Activated CD8-positive, alpha-beta T cell treated with anti-CD3 and anti-CD28 coated beads for 36 hours (primary cell): ENCODE measurements at regions of chr18 and their contacts with region 1.

Region 1: GRCh38 chr18:12934454-12935071 is 13.2 kb upstream of the SEH1L start:
- DNase-seq: peak; percentile 89
- ATAC-seq: peak; percentile 96
- H3K4me3 Mint-ChIP-seq: no peak overlapping the region
- H3K27ac Mint-ChIP-seq: no peak overlapping the region
- H3K4me1 Mint-ChIP-seq: peaks cover 2% of the 10 kb centered on the region
- H3K27me3 Mint-ChIP-seq: peaks cover 2% of the 10 kb centered on the region
- CTCF ChIP-seq: peak; percentile 92

Region 2: DNA sequence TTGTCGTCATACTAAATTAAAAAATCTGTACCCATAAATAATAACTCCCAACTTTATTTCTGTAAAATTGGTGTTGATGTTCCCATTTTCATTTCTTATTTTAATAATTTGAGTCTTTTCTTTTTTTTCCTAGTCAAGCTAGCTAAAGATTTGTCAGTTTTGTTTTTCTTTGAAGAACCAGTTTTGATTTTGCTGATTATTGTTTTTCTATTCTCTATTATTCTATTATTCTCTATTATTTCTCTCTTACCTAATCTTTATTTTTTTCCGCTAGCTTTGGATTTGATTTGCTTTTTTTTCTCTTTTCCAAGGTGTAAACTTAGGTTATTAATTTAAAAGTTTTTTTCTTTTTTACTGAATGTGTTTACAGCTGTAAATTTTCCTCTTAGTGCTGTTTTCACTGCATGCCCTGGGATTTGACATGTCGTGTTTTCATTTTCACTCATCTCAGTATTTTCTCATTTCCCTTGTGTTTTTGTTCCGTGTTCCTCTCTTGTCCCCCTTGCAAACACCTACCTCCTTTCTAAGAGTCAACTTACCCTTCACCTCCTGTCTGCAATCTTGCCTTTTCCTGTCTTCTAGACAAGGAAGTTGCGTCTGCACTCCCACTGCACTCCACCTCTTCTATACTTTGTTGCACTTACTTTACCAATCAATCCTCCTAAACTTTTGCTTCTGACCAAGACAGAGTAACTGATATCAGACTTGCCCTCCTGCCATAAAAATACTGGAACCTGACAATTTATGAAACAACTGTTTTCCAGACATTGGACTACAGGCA is 212.9 kb before region 1 on chr18:
- CTCF ChIA-PET with region 1: interaction called, 132 read pairs
- POLR2A ChIA-PET with region 1: no interaction called
- intact Hi-C with region 1: loop called (anchors 2 kb)
- DNase-seq: no peak
- ATAC-seq: no peak
- H3K4me3 Mint-ChIP-seq: no peak overlapping the region
- H3K27ac Mint-ChIP-seq: peak overlapping the region; percentile 9
- H3K4me1 Mint-ChIP-seq: peaks cover 4% of the 10 kb centered on the region
- H3K27me3 Mint-ChIP-seq: no peaks in the 10 kb centered on the region
- CTCF ChIP-seq: no peak

Region 3: GRCh38 chr18:12737243-12737902 is 197.2 kb before region 1 on chr18:
- CTCF ChIA-PET with region 1: interaction called, 15 read pairs
- POLR2A ChIA-PET with region 1: no interaction called
- intact Hi-C with region 1: loop called (anchors 5 kb)
- DNase-seq: no peak
- ATAC-seq: no peak
- H3K4me3 Mint-ChIP-seq: no peak overlapping the region
- H3K27ac Mint-ChIP-seq: no peak overlapping the region
- H3K4me1 Mint-ChIP-seq: no peaks in the 10 kb centered on the region
- H3K27me3 Mint-ChIP-seq: no peaks in the 10 kb centered on the region
- CTCF ChIP-seq: no peak

Region 4: GRCh38 chr18:12776821-12777471 is 157.6 kb before region 1 on chr18:
- CTCF ChIA-PET with region 1: no interaction called
- POLR2A ChIA-PET with region 1: no interaction called
- intact Hi-C with region 1: no loop called
- DNase-seq: no peak
- ATAC-seq: no peak
- H3K4me3 Mint-ChIP-seq: no peak overlapping the region
- H3K27ac Mint-ChIP-seq: no peak overlapping the region
- H3K4me1 Mint-ChIP-seq: peaks cover 18% of the 10 kb centered on the region
- H3K27me3 Mint-ChIP-seq: no peaks in the 10 kb centered on the region
- CTCF ChIP-seq: no peak

Region 5: GRCh38 chr18:12883684-12884405 is 50.7 kb before region 1 on chr18 and contains the start of gene PTPN2:
- CTCF ChIA-PET with region 1: interaction called, 12 read pairs
- POLR2A ChIA-PET with region 1: no interaction called
- intact Hi-C with region 1: no loop called
- DNase-seq: peak; percentile 94
- ATAC-seq: peak; percentile 90
- H3K4me3 Mint-ChIP-seq: peak within 1 kb of the TSS; percentile 86
- H3K27ac Mint-ChIP-seq: peak within 1 kb of the TSS; percentile 92
- H3K4me1 Mint-ChIP-seq: peaks cover 53% of the 10 kb centered on the region
- H3K27me3 Mint-ChIP-seq: no peaks in the 10 kb centered on the region
- CTCF ChIP-seq: no peak
- total RNA-seq, gene PTPN2: 50.8 to 55.8 TPM

Region 6: DNA sequence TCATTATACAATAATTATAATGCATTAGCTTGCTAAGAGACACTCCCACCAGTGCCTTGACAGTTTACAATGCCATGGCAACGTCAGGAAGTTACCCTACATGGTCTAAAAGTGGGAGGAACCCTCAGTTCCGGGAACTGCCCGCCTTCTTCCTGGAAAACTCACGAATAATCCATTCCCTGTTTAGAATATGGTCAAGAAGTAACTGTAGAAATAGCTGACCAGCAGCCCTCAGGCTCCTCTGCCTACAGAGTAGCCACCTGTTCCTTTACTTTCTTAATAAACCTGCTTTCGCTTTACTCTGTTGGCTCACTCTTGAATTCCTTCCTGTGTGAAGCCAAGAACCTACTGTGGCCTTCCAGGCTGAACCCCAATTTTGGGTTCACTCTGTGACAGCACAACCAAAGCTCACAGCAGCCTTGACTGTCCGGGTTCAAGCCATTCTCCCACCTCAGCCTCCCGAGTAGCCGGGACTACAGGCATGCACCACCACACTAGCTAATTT is 30.5 kb before region 1 on chr18:
- CTCF ChIA-PET with region 1: interaction called, 16 read pairs
- POLR2A ChIA-PET with region 1: no interaction called
- intact Hi-C with region 1: no loop called
- DNase-seq: peak; percentile 77
- ATAC-seq: peak; percentile 82
- H3K4me3 Mint-ChIP-seq: peak overlapping the region; percentile 48
- H3K27ac Mint-ChIP-seq: peak overlapping the region; percentile 60
- H3K4me1 Mint-ChIP-seq: peaks cover 4% of the 10 kb centered on the region
- H3K27me3 Mint-ChIP-seq: no peaks in the 10 kb centered on the region
- CTCF ChIP-seq: no peak

Region 7: GRCh38 chr18:12921178-12921577 is 13.4 kb before region 1 on chr18:
- CTCF ChIA-PET with region 1: interaction called, 13 read pairs
- POLR2A ChIA-PET with region 1: no interaction called
- intact Hi-C with region 1: no loop called
- DNase-seq: peak; percentile 70
- ATAC-seq: peak; percentile 99
- H3K4me3 Mint-ChIP-seq: peak overlapping the region; percentile 20
- H3K27ac Mint-ChIP-seq: peak overlapping the region; percentile 32
- H3K4me1 Mint-ChIP-seq: peaks cover 12% of the 10 kb centered on the region
- H3K27me3 Mint-ChIP-seq: no peaks in the 10 kb centered on the region
- CTCF ChIP-seq: no peak